ENCODE measurements at regions of chr1 and their contacts with region 1.

Region 1: DNA sequence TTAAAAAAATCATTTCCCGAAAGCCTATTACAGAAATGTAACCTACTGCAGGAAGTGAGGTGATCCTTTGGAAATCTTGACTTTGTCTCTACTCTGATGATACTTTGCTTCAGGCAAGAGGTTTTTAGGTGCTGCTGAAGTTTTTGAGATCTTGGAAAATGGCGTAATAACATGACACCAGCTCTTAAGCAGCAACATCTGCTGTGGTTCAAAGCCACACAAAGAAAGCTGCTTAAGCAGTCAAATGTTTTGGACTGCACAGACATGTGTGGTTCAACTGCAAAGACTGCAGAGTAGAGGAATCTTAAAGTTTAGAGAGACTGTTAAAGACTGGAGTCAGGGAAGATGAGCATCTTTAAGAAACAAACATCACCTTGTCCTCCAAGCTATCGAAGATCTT is 139.0 kb downstream of the RASAL2 start:
- DNase-seq: no peak
- ATAC-seq: no peak; the same call in 1 of the 2 replicates
- H3K4me3 ChIP-seq: no peak overlapping the region
- H3K27ac ChIP-seq: peak overlapping the region; percentile 54
- H3K4me1 ChIP-seq: peaks cover 9% of the 10 kb centered on the region
- H3K27me3 ChIP-seq: no peaks in the 10 kb centered on the region
- CTCF ChIP-seq: no peak

Region 2: GRCh38 chr1:178220094-178220493 is 12.9 kb before region 1 on chr1:
- CTCF ChIA-PET with region 1: no interaction called
- POLR2A ChIA-PET with region 1: interaction called, 11 read pairs
- in situ Hi-C with region 1: no loop called
- intact Hi-C with region 1: no loop called
- DNase-seq: no peak
- ATAC-seq: no peak
- H3K4me3 ChIP-seq: no peak overlapping the region
- H3K27ac ChIP-seq: no peak overlapping the region
- H3K4me1 ChIP-seq: no peaks in the 10 kb centered on the region; the same call in 1 of the 2 replicates
- H3K27me3 ChIP-seq: no peaks in the 10 kb centered on the region
- CTCF ChIP-seq: no peak

Region 3: DNA sequence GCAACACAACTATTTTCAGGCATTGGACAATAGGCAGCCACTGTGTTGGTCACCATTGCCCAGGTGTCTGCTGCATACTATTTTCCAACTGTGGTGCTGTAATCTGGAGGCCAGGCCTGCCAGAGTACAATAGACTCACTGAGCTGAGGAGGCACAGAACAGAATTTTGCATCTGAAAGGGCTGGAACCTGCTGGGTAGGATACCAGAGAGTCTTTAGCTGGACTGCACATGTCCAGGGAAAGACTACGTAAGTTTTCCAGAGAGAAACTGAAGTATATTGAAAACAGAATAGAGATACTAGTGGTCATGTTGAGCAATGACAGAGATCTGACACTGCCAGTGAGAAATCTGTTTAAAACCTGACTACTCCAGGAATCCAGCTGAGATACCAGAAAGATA is 61.7 kb after region 1 on chr1:
- CTCF ChIA-PET with region 1: no interaction called
- POLR2A ChIA-PET with region 1: interaction called, 14 read pairs
- in situ Hi-C with region 1: no loop called
- intact Hi-C with region 1: no loop called
- DNase-seq: no peak
- ATAC-seq: peak; percentile 38; the same call in 1 of the 2 replicates
- H3K4me3 ChIP-seq: no peak overlapping the region
- H3K27ac ChIP-seq: no peak overlapping the region
- H3K4me1 ChIP-seq: no peaks in the 10 kb centered on the region
- H3K27me3 ChIP-seq: no peaks in the 10 kb centered on the region
- CTCF ChIP-seq: no peak

Region 4: GRCh38 chr1:178341261-178341956 is 108.5 kb after region 1 on chr1:
- CTCF ChIA-PET with region 1: no interaction called
- POLR2A ChIA-PET with region 1: no interaction called
- in situ Hi-C with region 1: no loop called
- intact Hi-C with region 1: no loop called
- DNase-seq: no peak
- ATAC-seq: peak; percentile 81
- H3K4me3 ChIP-seq: peak overlapping the region in 1 of 2 experiments; percentile 29; a peak in 2 of 4 replicates
- H3K27ac ChIP-seq: peak overlapping the region; percentile 29
- H3K4me1 ChIP-seq: peaks cover 32% of the 10 kb centered on the region
- H3K27me3 ChIP-seq: no peaks in the 10 kb centered on the region
- CTCF ChIP-seq: no peak

Measured in Panc1 (cell line).